SK-N-SH (cell line): ENCODE measurements at regions of chr1 and their contacts with region 1.

Region 1: GRCh38 chr1:6646499-6647148 is 22.0 kb downstream of the THAP3 start:
- DNase-seq: peak; percentile 66
- H3K4me3 ChIP-seq: peak overlapping the region in 1 of 2 experiments; percentile 31; a peak in 1 of 4 replicates
- H3K27ac ChIP-seq: no peak overlapping the region
- H3K4me1 ChIP-seq: no peaks in the 10 kb centered on the region
- H3K27me3 ChIP-seq: no peaks in the 10 kb centered on the region
- CTCF ChIP-seq: peak; percentile 60
- EP300 ChIP-seq: no peak
- RAD21 ChIP-seq: peak; percentile 73

Region 2: DNA sequence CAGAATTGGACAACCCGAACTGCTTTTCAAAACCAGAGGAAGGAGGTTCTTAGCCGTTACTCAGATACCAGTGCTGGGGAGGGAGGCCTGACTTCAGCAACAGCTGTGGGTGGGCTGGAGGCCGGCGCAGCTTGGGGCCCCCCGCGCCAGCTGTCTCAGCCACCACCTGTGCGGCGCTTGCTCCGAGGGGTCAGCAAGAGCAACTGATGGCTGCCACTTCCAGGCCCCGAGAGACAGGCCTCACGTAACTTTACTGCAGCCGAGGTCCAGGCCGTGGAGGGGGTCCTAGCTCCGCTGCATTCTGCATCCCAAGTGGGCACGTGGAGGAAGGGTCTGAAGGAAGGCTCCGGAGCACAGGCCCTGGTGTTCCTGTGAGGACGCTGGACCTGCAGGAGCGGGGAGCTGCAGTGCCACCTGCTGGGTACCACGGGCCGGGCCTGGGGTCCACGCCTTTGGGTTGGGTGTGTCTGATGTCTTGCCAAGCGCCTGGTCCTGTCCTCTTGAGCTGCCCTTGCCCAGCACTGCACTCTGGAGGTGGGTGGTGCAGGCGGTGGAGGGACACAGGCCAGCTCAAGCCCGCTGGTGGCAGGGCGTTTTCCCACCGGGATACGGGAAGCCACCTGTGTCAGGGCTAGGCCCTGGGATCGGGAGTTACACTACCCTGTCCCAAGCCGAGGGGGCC is 12.1 kb before region 1 on chr1:
- CTCF ChIA-PET with region 1: interaction called, 20 read pairs
- POLR2A ChIA-PET with region 1: interaction called, 3 read pairs
- DNase-seq: peak; percentile 83
- H3K4me3 ChIP-seq: no peak overlapping the region
- H3K27ac ChIP-seq: no peak overlapping the region
- H3K4me1 ChIP-seq: no peaks in the 10 kb centered on the region
- H3K27me3 ChIP-seq: no peaks in the 10 kb centered on the region
- CTCF ChIP-seq: peak; percentile 43
- EP300 ChIP-seq: no peak
- RAD21 ChIP-seq: peak; percentile 51

Region 3: GRCh38 chr1:6658359-6659060 is 11.9 kb after region 1 on chr1:
- CTCF ChIA-PET with region 1: interaction called, 14 read pairs
- POLR2A ChIA-PET with region 1: no interaction called
- DNase-seq: no peak
- H3K4me3 ChIP-seq: no peak overlapping the region
- H3K27ac ChIP-seq: no peak overlapping the region
- H3K4me1 ChIP-seq: no peaks in the 10 kb centered on the region; a peak in 1 of 4 replicates
- H3K27me3 ChIP-seq: no peaks in the 10 kb centered on the region
- CTCF ChIP-seq: no peak
- EP300 ChIP-seq: no peak
- RAD21 ChIP-seq: 0 out of 2 replicates have a peak, but pooled peaks have one; percentile 22